Activated naive CD4-positive, alpha-beta T cell treated with anti-CD3 and anti-CD28 coated beads, Interleukin-2, amount 10 ng/mL, durations not matched to agents 7 days and 5 days (primary cell): ENCODE measurements at regions of chr11 and their contacts with region 1.

Region 1: GRCh38 chr11:47152953-47153950 is 23.4 kb downstream of the ARFGAP2 start:
- DNase-seq: peak; percentile 71
- H3K4me3 Mint-ChIP-seq: no peak overlapping the region
- H3K27ac Mint-ChIP-seq: peak overlapping the region; percentile 78
- H3K4me1 Mint-ChIP-seq: peaks cover 39% of the 10 kb centered on the region
- H3K27me3 Mint-ChIP-seq: no peaks in the 10 kb centered on the region

Region 2: GRCh38 chr11:46889689-46890475 is 263.4 kb before region 1 on chr11:
- CTCF ChIA-PET with region 1: interaction called, 22 read pairs
- DNase-seq: peak; percentile 84
- H3K4me3 Mint-ChIP-seq: no peak overlapping the region
- H3K27ac Mint-ChIP-seq: no peak overlapping the region
- H3K4me1 Mint-ChIP-seq: no peaks in the 10 kb centered on the region
- H3K27me3 Mint-ChIP-seq: peaks cover 30% of the 10 kb centered on the region

Region 3: GRCh38 chr11:46896719-46897406 is 256.4 kb before region 1 on chr11:
- CTCF ChIA-PET with region 1: interaction called, 17 read pairs
- DNase-seq: no peak
- H3K4me3 Mint-ChIP-seq: no peak overlapping the region
- H3K27ac Mint-ChIP-seq: no peak overlapping the region
- H3K4me1 Mint-ChIP-seq: no peaks in the 10 kb centered on the region
- H3K27me3 Mint-ChIP-seq: peaks cover 13% of the 10 kb centered on the region

Region 4: DNA sequence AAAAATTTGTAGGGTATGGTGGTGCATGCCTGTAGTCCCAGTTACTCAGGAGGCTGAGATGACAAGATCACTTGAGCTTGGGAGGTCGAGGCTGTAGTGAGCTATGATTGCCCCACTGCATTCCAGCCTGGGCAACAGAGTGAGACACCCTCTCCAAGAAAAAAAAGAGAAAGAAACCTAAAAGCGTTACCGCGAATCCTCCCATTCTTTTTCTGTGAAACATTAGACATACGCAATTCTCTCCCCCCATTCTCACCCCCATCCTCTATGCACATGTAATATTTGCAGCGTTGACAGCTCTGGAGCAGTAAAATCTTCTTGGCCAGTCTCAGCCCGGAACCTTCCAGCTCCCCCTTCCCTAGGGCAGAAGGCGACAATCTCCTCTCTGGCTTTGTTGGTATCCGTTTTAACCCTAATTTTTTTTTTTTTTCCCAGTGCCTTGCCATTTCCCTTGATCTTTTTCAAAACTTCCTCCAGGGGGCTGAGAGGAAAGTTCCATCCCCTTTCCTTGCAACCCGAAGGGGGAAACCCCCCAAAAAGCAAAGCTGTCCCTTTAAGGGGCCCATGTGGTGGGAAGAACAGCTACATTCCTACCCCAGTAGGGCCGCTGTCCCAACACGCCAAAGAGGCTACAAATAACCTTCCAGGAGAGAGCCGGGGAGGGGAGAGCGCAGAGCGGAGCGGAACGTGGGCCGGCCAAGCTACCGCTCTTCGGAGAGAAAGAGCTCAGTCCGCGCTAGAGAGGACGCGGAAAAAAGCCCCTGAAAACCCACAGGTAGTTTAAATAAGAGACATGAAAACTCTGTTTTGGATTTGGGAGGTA is 236.8 kb before region 1 on chr11:
- CTCF ChIA-PET with region 1: interaction called, 22 read pairs
- DNase-seq: peak; percentile 24
- H3K4me3 Mint-ChIP-seq: peak overlapping the region; percentile 29
- H3K27ac Mint-ChIP-seq: no peak overlapping the region
- H3K4me1 Mint-ChIP-seq: peaks cover 32% of the 10 kb centered on the region
- H3K27me3 Mint-ChIP-seq: peaks cover 95% of the 10 kb centered on the region

Region 5: DNA sequence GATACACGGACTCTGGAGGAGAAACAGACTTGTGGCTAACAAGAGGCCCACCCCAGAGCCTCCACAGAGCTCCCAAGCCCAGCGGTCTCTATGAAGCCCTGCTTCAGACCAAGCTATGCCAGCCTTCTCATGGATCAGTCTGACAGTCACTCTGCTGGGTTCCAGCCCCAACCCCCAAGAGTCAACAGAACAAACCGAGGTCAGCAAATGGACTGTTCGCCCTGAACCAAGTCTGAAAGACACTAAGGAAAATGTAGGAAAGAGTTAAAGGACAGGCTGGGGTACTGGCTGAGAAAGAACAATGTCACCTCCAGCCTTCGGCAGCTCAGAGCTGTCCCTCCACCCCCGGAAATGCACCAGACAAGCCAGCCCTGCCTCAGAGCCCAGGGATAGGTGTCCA is 19.5 kb after region 1 on chr11:
- CTCF ChIA-PET with region 1: no interaction called
- DNase-seq: no peak
- H3K4me3 Mint-ChIP-seq: no peak overlapping the region
- H3K27ac Mint-ChIP-seq: no peak overlapping the region
- H3K4me1 Mint-ChIP-seq: peaks cover 55% of the 10 kb centered on the region
- H3K27me3 Mint-ChIP-seq: no peaks in the 10 kb centered on the region

Region 6: GRCh38 chr11:47276923-47277322 is 123.7 kb after region 1 on chr11:
- CTCF ChIA-PET with region 1: no interaction called
- DNase-seq: no peak
- H3K4me3 Mint-ChIP-seq: no peak overlapping the region
- H3K27ac Mint-ChIP-seq: no peak overlapping the region
- H3K4me1 Mint-ChIP-seq: peaks cover 12% of the 10 kb centered on the region
- H3K27me3 Mint-ChIP-seq: no peaks in the 10 kb centered on the region